ENCODE measurements at regions of chr11 and their contacts with region 1.

Region 1: GRCh38 chr11:83292709-83293456 is 6.7 kb upstream of the CCDC90B start:
- DNase-seq: peak; percentile 25
- H3K4me3 Mint-ChIP-seq: peak overlapping the region; percentile 55
- H3K27ac Mint-ChIP-seq: no peak overlapping the region
- H3K4me1 Mint-ChIP-seq: peaks cover 5% of the 10 kb centered on the region
- H3K27me3 Mint-ChIP-seq: peaks cover 13% of the 10 kb centered on the region

Region 2: DNA sequence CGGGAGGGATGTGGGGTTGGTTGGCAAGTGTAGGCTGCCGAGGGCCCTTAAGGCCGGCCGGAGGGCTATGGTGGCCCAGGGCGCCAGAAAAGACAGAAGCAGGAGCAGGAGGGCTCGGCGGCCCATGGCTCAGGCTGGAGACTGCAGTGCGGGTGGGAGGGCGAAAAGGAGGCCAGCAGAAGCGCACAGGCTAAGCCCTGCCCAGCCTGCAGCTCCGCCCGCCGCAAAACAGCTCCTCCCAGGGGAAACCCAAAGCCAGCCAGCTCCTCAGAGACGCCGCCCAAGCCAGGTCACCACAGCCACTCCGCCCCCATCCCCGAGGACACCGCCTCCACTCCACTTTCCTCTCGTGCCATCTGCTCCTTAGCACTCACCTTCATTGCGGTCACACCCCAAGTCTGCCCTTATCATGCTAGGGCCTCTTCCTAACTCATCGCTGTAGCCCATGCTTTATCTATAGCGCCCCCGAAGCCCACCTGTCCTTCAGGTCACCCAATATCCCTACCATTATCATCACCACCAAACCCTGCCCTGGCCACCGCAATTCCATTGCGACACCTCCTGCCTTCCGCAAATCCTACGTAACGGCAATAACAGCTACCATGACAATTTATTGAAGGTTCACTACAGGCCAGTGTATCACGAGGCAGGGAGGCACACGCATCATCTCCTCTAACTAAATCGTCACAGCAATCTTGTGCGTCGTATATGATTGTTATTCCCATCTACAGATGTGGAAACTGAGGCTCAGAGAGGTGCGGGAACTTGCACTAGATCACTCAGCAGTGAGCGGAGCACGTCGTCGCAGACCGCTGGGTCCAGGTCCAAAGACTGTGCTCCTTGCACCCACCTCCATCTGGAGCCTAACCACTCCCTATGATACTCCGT is 392.4 kb before region 1 on chr11 and contains the start of gene PRCP:
- intact Hi-C with region 1: no loop called
- DNase-seq: peak; percentile 93
- H3K4me3 Mint-ChIP-seq: peak within 1 kb of the TSS; percentile 99
- H3K27ac Mint-ChIP-seq: peak within 1 kb of the TSS; percentile 100
- H3K4me1 Mint-ChIP-seq: peaks cover 70% of the 10 kb centered on the region
- H3K27me3 Mint-ChIP-seq: no peaks in the 10 kb centered on the region
- total RNA-seq, gene PRCP: 22.7 and 24.0 TPM in 2 replicates

Region 3: GRCh38 chr11:83019888-83020579 is 272.8 kb before region 1 on chr11:
- intact Hi-C with region 1: no loop called
- DNase-seq: no peak
- H3K4me3 Mint-ChIP-seq: no peak overlapping the region
- H3K27ac Mint-ChIP-seq: no peak overlapping the region
- H3K4me1 Mint-ChIP-seq: peaks cover 11% of the 10 kb centered on the region
- H3K27me3 Mint-ChIP-seq: no peaks in the 10 kb centered on the region

Region 4: DNA sequence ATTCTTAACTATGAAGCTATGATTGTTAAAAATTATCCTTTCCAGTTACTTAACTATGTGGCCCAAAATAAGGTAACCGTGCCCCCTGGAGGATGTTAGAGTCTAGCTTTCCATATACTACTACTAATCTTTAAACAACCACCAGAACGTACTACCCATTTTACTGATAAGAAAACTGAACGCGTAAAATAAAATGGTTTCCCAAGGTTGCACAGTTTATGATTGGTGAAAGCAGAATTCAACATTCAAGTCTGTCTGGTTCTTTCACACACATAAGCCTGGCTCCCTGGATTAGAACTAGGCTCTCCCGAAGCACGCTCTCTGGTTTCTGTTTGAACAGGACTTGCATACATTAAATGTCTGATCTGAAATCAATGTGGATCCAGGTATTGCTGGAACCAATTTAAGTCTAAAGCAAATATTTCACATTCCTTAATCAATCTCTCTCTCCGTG is 431.2 kb after region 1 on chr11:
- intact Hi-C with region 1: loop called (anchors 2 kb)
- DNase-seq: no peak
- H3K4me3 Mint-ChIP-seq: peak overlapping the region; percentile 46
- H3K27ac Mint-ChIP-seq: no peak overlapping the region
- H3K4me1 Mint-ChIP-seq: peaks cover 6% of the 10 kb centered on the region
- H3K27me3 Mint-ChIP-seq: peaks cover 12% of the 10 kb centered on the region

Measured in activated T-helper 1 cell treated with anti-CD3 and anti-CD28 coated beads, Interleukin-12 subunit alpha, Interleukin-12 subunit beta, Interleukin-2, Interleukin-4 antibody, amounts not matched to agents 30 ng/mL and 10 ng/mL and 1 ng/mL, durations not matched to agents 14 hours and 24 hours and 36 hours (primary cell).